ENCODE measurements at regions of chr10 and their contacts with region 1.

Region 1: GRCh38 chr10:105706281-105707026 is 1065.4 kb downstream of the SORCS3 start:
- DNase-seq: no peak

Region 2: DNA sequence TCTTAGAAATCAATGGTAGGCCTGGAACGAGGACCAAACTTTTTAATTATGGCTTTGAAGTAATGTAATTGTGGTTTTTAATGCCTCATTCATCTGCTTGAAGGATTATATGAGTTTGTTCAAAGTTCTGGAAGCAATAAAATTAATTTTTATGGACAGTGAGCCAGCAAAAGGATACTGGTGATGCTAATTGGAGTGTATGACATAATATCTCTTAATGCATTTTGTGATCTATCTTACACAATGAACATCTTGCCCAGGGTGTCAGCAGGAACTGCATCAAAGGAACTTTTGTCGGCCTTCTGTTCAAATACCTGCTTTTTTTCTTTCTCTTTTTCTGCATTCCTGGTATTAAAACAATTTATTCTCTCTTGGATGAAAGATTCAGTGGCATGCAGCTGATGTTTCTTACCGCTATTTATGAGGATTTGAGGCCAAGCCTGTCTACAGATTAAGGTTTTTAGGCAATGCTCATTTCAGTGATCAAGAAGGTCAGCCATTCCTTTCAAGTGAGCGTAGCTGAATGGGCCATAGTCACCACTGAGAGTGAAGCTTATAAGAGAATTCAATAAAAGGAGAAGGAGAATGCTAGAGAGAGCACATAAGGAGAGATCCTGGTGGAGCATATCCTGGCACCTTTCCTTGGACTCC is 90.6 kb before region 1 on chr10:
- intact Hi-C with region 1: no loop called
- DNase-seq: no peak

Region 3: DNA sequence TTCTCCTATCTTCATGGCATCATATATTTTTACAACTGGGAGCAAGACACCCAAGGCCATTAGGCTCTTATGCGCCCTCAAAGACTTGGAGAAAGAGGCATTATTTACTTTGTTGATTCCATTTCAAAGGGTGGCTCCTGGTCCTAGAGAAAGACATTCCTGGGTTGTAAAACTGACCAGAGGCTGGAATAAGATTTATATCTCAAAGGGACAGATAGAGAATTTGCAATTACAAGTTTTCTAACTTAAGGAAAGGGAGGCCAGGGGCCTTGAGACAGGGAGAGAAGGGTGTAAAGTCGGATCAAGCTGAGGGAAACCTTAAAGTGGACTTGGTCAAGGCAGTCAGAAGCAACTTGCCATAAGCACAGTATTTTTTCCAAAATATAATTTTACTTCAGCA is 20.7 kb after region 1 on chr10:
- intact Hi-C with region 1: loop called (anchors 1 kb)
- DNase-seq: no peak

Region 4: DNA sequence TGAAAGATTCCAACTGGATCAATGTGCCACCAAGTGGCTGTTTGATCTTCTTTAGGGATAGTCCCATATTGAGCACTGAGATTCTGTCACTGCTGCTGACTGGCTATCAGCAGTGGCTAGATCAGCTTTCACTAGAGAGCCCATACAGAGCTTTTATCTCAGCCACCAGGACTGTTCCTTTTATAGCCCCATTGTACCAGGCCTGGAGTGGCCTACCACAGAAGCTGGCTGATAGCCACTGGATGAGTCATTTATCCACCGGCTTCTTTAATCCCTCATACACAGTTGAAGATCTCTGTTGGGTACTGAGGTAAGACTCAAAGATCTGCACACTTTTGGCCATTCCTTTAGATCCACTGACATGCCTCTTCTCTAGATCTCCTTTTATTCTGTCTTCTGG is 35.7 kb after region 1 on chr10:
- intact Hi-C with region 1: no loop called
- DNase-seq: no peak